ENCODE measurements at regions of chr7 and their contacts with region 1.

Region 1: GRCh38 chr7:155103839-155104238 is 33.7 kb downstream of the HTR5A start:
- DNase-seq: no peak
- H3K4me3 ChIP-seq: no peak overlapping the region
- H3K27ac ChIP-seq: no peak overlapping the region
- H3K4me1 ChIP-seq: no peaks in the 10 kb centered on the region
- H3K27me3 ChIP-seq: peaks cover 13% of the 10 kb centered on the region
- CTCF ChIP-seq: no peak

Region 2: DNA sequence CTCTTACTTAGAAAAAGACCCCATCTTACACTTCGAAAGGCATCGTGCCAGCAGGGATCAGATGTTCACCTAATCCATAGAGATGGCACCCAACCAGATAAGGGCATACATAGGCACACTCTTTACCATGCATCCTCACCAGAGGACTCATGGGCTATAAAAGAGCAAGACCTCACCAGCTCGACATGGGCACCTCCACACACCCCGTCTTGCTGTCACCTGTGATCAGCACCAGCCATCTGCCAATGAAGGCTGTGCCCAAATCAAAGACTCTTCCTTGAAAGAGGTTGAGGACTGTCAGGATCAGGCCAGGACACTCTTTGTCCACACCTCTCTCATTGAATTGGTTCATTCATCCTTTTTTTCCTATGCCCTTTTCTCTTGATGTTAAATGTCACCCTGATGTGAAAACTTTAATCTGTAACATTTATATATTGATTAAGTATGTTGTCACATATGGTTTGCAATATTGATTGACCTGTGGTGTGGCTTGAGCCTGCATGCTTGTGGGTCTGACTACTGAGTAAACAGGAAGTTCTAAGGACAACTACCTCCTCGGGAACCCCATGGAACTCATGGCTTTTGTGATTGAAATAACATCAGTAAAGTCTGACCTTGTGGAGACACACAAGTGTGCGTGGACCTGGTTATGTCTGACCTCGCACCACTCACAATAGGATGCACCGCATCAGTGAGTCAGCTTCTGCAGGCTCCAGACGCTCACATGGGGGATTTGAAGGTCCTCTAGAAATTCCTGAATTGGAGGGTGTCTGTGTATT is 41.8 kb after region 1 on chr7:
- CTCF ChIA-PET with region 1: no interaction called
- dilution Hi-C with region 1: loop called (anchors 5 kb)
- in situ Hi-C with region 1: no loop called
- intact Hi-C with region 1: no loop called
- DNase-seq: no peak
- H3K4me3 ChIP-seq: no peak overlapping the region
- H3K27ac ChIP-seq: no peak overlapping the region
- H3K4me1 ChIP-seq: no peaks in the 10 kb centered on the region
- H3K27me3 ChIP-seq: peaks cover 2% of the 10 kb centered on the region
- CTCF ChIP-seq: no peak

Region 3: GRCh38 chr7:155567646-155568334 is 464.0 kb after region 1 on chr7:
- CTCF ChIA-PET with region 1: no interaction called
- dilution Hi-C with region 1: no loop called
- in situ Hi-C with region 1: no loop called
- intact Hi-C with region 1: no loop called
- DNase-seq: no peak
- H3K4me3 ChIP-seq: no peak overlapping the region
- H3K27ac ChIP-seq: no peak overlapping the region
- H3K4me1 ChIP-seq: no peaks in the 10 kb centered on the region
- H3K27me3 ChIP-seq: peaks cover 5% of the 10 kb centered on the region
- CTCF ChIP-seq: no peak

Measured in mammary epithelial cell (primary cell).